Posterior cingulate gyrus (tissue), 11 donors: ENCODE measurements at regions of chr13 and their contacts with region 1.

Region 1: DNA sequence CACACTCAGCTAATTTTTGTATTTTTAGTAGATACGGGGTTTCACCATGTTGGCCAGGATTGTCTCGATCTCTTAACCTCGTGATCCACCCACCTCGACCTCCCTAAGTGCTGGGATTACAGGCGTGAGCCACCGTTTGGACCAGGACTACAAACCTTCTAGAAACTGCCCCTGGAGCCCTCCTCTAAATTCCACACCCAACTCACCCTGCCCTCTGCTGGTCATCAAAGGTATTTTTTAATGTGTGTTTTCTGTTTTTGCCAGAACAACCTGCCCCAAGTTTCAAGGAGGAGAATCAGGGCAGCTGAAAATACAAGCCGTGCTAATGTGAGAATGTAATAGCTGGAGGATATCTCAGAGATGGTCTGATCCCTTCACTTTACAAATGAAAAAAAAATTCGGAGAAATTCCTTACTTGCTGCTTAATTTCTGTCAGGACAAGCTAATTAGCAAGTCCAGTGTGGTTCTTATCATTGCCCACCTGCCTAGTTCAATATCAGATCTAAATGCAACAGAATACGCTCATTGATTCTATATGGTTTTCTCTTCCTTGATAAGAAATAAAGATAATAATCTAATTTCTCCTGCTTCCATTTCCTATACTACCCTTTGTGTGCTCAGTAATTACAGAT is 4.1 kb downstream of the ATP8A2 start:
- DNase-seq: peak in 1 of 10 donors; percentile 25

Region 2: GRCh38 chr13:25493931-25494640 is 118.2 kb after region 1 on chr13:
- intact Hi-C with region 1: loop called (anchors 10 kb)
- DNase-seq: no peak